B cell (primary cell): ENCODE measurements at regions of chrX and their contacts with region 1.

Region 1: DNA sequence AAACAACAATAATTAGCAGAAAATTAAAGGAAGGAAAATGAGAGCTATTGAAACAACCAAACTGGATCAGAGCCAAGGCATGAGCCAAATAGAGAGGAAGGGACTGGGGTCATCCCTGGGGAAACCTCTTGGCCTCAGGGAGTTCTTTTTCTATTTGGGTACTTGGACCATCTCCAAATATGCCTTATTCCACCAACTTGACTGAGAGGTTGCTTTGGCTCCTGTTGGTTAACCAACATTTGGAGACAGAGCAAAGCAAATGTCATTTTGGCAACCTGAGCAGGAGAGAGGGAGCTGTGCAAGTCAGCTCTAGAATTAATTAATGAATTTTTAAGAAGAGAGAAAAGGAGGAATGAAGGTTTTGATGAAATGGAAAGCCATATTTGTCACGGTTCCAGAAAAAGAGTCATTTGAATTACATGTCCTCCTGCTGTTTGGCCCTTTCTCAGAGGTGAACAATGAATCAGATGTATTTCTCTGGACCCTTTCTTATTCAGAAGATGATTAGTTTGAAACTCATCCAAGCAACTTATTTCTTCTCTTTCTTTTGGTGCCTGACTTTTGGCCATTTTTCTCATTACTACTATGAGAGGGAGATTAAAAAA is 119.1 kb downstream of the CNKSR2 start:
- DNase-seq: no peak
- ATAC-seq: no peak
- H3K4me3 ChIP-seq: no peak overlapping the region
- H3K4me3 Mint-ChIP-seq: no peak overlapping the region
- H3K27ac ChIP-seq: no peak overlapping the region
- H3K27ac Mint-ChIP-seq: no peak overlapping the region
- H3K4me1 ChIP-seq: no peaks in the 10 kb centered on the region
- H3K4me1 Mint-ChIP-seq: no peaks in the 10 kb centered on the region
- H3K27me3 ChIP-seq: no peaks in the 10 kb centered on the region
- H3K27me3 Mint-ChIP-seq: no peaks in the 10 kb centered on the region
- CTCF ChIP-seq: no peak

Region 2: GRCh38 chrX:21047034-21047455 is 446.3 kb before region 1 on chrX:
- CTCF ChIA-PET with region 1: no interaction called
- POLR2A ChIA-PET with region 1: no interaction called
- intact Hi-C with region 1: no loop called
- DNase-seq: no peak
- ATAC-seq: no peak
- H3K4me3 ChIP-seq: no peak overlapping the region
- H3K4me3 Mint-ChIP-seq: no peak overlapping the region
- H3K27ac ChIP-seq: no peak overlapping the region
- H3K27ac Mint-ChIP-seq: no peak overlapping the region
- H3K4me1 ChIP-seq: no peaks in the 10 kb centered on the region
- H3K4me1 Mint-ChIP-seq: no peaks in the 10 kb centered on the region
- H3K27me3 ChIP-seq: no peaks in the 10 kb centered on the region
- H3K27me3 Mint-ChIP-seq: peaks cover 5% of the 10 kb centered on the region
- CTCF ChIP-seq: no peak

Region 3: GRCh38 chrX:21438792-21439191 is 54.5 kb before region 1 on chrX:
- CTCF ChIA-PET with region 1: no interaction called
- POLR2A ChIA-PET with region 1: no interaction called
- intact Hi-C with region 1: no loop called
- DNase-seq: peak; percentile 64
- ATAC-seq: peak; percentile 90
- H3K4me3 ChIP-seq: peak overlapping the region in 1 of 5 experiments; percentile 48
- H3K4me3 Mint-ChIP-seq: peak overlapping the region; percentile 74
- H3K27ac ChIP-seq: peak overlapping the region; percentile 62 to 81
- H3K27ac Mint-ChIP-seq: peak overlapping the region; percentile 87
- H3K4me1 ChIP-seq: peaks cover 8 to 24% of the 10 kb centered on the region in 2 donors
- H3K4me1 Mint-ChIP-seq: peaks cover 29% of the 10 kb centered on the region
- H3K27me3 ChIP-seq: no peaks in the 10 kb centered on the region
- H3K27me3 Mint-ChIP-seq: no peaks in the 10 kb centered on the region
- CTCF ChIP-seq: no peak

Region 4: GRCh38 chrX:21745756-21746155 is 252.4 kb after region 1 on chrX:
- CTCF ChIA-PET with region 1: no interaction called
- POLR2A ChIA-PET with region 1: no interaction called
- intact Hi-C with region 1: loop called (anchors 10 kb)
- DNase-seq: peak; percentile 43
- ATAC-seq: no peak
- H3K4me3 ChIP-seq: no peak overlapping the region
- H3K4me3 Mint-ChIP-seq: no peak overlapping the region
- H3K27ac ChIP-seq: no peak overlapping the region
- H3K27ac Mint-ChIP-seq: no peak overlapping the region
- H3K4me1 ChIP-seq: no peaks in the 10 kb centered on the region
- H3K4me1 Mint-ChIP-seq: no peaks in the 10 kb centered on the region
- H3K27me3 ChIP-seq: peaks cover 0 to 4% (median 0%) of the 10 kb centered on the region in 4 experiments
- H3K27me3 Mint-ChIP-seq: peaks cover 12% of the 10 kb centered on the region
- CTCF ChIP-seq: peak; percentile 64